Activated naive CD4-positive, alpha-beta T cell treated with anti-CD3 and anti-CD28 coated beads, Interleukin-2, amount 10 ng/mL, durations not matched to agents 7 days and 5 days (primary cell): ENCODE measurements at regions of chrX and their contacts with region 1.

Region 1: DNA sequence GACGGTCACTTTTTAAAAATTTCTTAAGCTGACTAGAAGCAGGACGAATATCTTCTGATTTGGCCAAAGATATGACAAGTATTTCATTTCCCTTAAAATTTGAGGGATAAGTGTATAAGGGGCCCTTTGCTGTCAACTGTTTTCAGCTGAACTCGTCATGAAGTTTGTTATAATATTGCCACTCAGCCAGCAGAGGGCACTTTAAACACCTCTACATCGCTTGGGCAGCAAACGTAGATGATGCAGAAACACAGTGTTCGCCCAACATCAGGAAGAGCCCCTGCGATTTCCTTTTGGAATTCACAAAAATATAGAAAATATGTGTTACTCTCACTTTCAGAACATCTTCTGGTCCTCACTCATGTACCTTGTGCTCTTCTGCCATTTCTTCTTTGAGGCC is 435.7 kb upstream of the FMR1 start:
- DNase-seq: peak; percentile 33
- H3K4me3 Mint-ChIP-seq: no peak overlapping the region
- H3K27ac Mint-ChIP-seq: no peak overlapping the region
- H3K4me1 Mint-ChIP-seq: no peaks in the 10 kb centered on the region
- H3K27me3 Mint-ChIP-seq: no peaks in the 10 kb centered on the region

Region 2: DNA sequence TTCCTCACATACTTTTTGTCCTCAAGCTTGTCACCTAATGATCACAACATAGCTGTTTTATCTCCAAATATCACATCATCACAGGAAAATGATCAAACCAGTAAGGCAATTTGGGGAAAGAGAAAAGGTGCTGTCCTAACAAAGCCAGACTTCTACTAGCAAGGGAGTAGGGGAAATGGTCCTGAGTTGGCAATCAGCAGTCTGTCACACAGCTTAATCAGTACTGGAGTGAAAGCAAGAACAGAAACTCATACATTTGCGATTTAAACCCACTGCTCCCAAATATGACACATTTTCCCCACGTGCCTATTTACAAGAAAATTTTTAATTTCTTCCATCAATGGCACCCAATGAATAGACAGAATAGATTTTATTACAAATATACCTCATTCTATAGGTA is 111.1 kb before region 1 on chrX:
- CTCF ChIA-PET with region 1: no interaction called
- DNase-seq: no peak
- H3K4me3 Mint-ChIP-seq: no peak overlapping the region
- H3K27ac Mint-ChIP-seq: no peak overlapping the region
- H3K4me1 Mint-ChIP-seq: no peaks in the 10 kb centered on the region
- H3K27me3 Mint-ChIP-seq: no peaks in the 10 kb centered on the region

Region 3: GRCh38 chrX:147803948-147804347 is 327.9 kb after region 1 on chrX:
- CTCF ChIA-PET with region 1: interaction called, 23 read pairs
- DNase-seq: peak; percentile 24
- H3K4me3 Mint-ChIP-seq: no peak overlapping the region
- H3K27ac Mint-ChIP-seq: no peak overlapping the region
- H3K4me1 Mint-ChIP-seq: peaks cover 10% of the 10 kb centered on the region
- H3K27me3 Mint-ChIP-seq: peaks cover 3% of the 10 kb centered on the region